ENCODE measurements at regions of chr5 and their contacts with region 1.

Region 1: GRCh38 chr5:134092878-134093277 is 21.6 kb upstream of the TCF7 start:
- DNase-seq: peak; percentile 66
- H3K4me3 ChIP-seq: no peak overlapping the region
- H3K27ac ChIP-seq: peak overlapping the region in 3 of 4 donors; percentile 7 to 63 (median 48)
- H3K4me1 ChIP-seq: peaks cover 0 to 26% (median 6%) of the 10 kb centered on the region in 4 donors
- H3K27me3 ChIP-seq: no peaks in the 10 kb centered on the region
- CTCF ChIP-seq: no peak
- EP300 ChIP-seq: no peak
- POLR2A ChIP-seq: no peak

Region 2: GRCh38 chr5:134145779-134146581 is 53.1 kb after region 1 on chr5:
- in situ Hi-C with region 1: loop called in 1 of 4 experiments (anchors 10 kb)
- intact Hi-C with region 1: no loop called
- DNase-seq: peak; percentile 84
- H3K4me3 ChIP-seq: no peak overlapping the region
- H3K27ac ChIP-seq: no peak overlapping the region
- H3K4me1 ChIP-seq: peaks cover 0 to 8% (median 0%) of the 10 kb centered on the region in 4 donors
- H3K27me3 ChIP-seq: no peaks in the 10 kb centered on the region
- CTCF ChIP-seq: peak; percentile 89 to 97 (median 94)
- EP300 ChIP-seq: no peak
- POLR2A ChIP-seq: no peak

Region 3: GRCh38 chr5:134994560-134995156 is 901.8 kb after region 1 on chr5:
- in situ Hi-C with region 1: no loop called
- intact Hi-C with region 1: no loop called
- DNase-seq: no peak
- H3K4me3 ChIP-seq: no peak overlapping the region
- H3K27ac ChIP-seq: no peak overlapping the region
- H3K4me1 ChIP-seq: no peaks in the 10 kb centered on the region
- H3K27me3 ChIP-seq: no peaks in the 10 kb centered on the region
- CTCF ChIP-seq: no peak
- EP300 ChIP-seq: no peak
- POLR2A ChIP-seq: no peak